ACHN (cell line): ENCODE measurements at regions of chr3 and their contacts with region 1.

Region 1: DNA sequence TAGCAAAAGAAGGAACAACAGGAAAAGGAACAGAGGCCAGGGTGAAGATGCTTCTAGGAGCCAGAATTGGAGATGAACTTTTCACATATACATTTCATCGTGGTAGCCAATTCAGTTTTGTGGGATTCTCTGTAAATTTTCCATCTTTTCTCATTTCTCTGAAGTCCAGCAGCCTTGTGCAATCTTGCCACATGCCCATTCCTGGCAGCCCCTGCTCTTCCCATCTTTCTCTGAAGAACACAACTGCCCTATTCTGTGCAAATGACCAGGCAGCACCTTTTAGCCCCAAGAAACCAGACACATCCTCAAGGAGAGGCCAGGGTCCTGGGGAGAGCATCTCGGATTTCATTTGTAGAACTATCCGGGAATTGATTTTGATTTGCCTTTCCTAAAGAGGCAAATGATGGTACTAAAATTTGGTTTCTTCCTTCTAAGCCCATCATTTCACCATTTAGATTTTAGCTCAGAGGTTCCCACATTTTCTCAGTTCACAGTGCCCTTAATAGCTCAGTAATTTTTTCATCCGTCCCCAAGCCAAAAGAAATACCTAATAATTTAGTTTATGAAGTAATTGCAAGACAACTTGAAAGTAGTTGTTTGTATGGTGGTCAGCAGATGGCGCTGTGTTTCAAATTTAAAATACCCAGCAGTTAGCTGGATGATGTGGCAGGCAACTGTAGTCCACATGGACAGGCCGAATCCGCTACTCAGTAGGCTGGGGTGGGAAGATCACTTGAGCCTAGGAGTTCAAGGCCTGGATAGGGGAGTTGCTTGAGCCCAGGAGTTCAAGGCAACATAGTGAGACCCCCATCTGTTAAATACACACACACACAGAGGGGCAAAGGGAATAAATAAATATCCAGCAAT is 61.3 kb upstream of the ACKR4 start:
- DNase-seq: peak; percentile 66

Region 2: GRCh38 chr3:132641837-132642538 is 106.2 kb after region 1 on chr3:
- in situ Hi-C with region 1: loop called (anchors 25 kb)
- DNase-seq: peak; percentile 63

Region 3: GRCh38 chr3:132867956-132868355 is 332.1 kb after region 1 on chr3:
- in situ Hi-C with region 1: no loop called
- DNase-seq: no peak